ENCODE measurements at regions of chr3 and their contacts with region 1.

Region 1: GRCh38 chr3:32667122-32667521 is 17.9 kb upstream of the CNOT10 start:
- DNase-seq: no peak
- H3K4me3 ChIP-seq: no peak overlapping the region
- H3K4me3 Mint-ChIP-seq: no peak overlapping the region
- H3K27ac Mint-ChIP-seq: no peak overlapping the region
- H3K4me1 ChIP-seq: peaks cover 5% of the 10 kb centered on the region; the same call in 1 of the 2 replicates
- H3K4me1 Mint-ChIP-seq: no peaks in the 10 kb centered on the region
- H3K27me3 ChIP-seq: no peaks in the 10 kb centered on the region
- H3K27me3 Mint-ChIP-seq: peaks cover 4% of the 10 kb centered on the region
- CTCF ChIP-seq: no peak

Region 2: DNA sequence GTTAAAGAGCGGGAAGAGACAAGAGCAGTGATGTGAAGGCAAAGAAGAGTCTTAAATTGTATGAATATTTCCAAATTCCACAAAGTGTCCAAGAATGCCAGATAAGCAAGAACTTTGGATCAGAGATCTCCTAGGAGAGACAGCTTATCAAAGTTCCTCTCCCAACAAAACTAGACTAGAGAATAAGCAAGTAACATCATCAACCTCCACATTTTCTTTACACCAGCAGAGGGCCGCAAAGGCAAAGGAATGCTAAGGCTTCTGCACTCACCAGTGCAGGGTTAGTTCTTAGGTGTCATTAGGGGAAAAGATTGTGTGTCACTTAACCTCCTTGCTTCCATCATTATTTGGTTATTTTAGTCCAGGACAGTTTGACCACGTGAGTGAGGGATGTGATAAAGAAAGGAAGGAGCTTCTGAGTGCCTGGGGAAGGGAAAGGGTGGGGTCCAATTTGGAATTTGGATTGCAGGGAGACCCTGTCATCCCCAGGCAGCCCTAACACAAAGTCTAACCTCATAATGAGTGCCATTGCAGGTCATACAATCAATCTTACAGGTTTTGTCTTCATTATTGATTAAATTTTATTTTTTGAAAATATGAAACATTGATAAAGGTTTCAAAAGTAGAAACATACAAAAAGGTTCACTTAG is 156.9 kb before region 1 on chr3:
- CTCF ChIA-PET with region 1: interaction called, 3 read pairs
- POLR2A ChIA-PET with region 1: no interaction called
- intact Hi-C with region 1: loop called (anchors 1 kb)
- DNase-seq: peak; percentile 71 to 77
- H3K4me3 ChIP-seq: no peak overlapping the region
- H3K4me3 Mint-ChIP-seq: no peak overlapping the region
- H3K27ac Mint-ChIP-seq: no peak overlapping the region
- H3K4me1 ChIP-seq: no peaks in the 10 kb centered on the region
- H3K4me1 Mint-ChIP-seq: no peaks in the 10 kb centered on the region
- H3K27me3 ChIP-seq: no peaks in the 10 kb centered on the region
- H3K27me3 Mint-ChIP-seq: no peaks in the 10 kb centered on the region
- CTCF ChIP-seq: peak; percentile 63 to 77

Measured in Caco-2 (cell line).